ENCODE measurements at regions of chr7 and their contacts with region 1.

Region 1: DNA sequence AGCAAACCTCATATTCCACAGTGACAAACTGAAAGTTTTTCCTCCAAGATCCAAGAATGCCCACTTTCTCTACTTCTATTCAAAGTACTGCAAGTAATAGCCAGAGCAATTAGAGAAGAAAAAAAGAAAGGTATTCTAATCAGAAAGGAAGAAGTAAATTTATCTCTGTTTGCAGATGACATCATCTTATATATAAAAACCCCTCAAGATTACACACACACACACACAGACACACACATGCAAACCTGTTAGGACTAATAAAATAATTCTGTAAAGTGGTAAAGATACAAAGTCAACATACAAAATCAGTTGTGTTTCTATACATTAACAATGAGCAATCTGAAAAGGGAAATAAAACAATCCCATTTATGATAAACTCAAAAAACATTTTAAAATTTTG is 44.7 kb upstream of the AASS start:
- DNase-seq: no peak
- H3K4me3 ChIP-seq: no peak overlapping the region
- H3K27ac ChIP-seq: no peak overlapping the region
- H3K4me1 ChIP-seq: no peaks in the 10 kb centered on the region
- H3K27me3 ChIP-seq: no peaks in the 10 kb centered on the region
- CTCF ChIP-seq: no peak
- POLR2A ChIP-seq: no peak

Region 2: DNA sequence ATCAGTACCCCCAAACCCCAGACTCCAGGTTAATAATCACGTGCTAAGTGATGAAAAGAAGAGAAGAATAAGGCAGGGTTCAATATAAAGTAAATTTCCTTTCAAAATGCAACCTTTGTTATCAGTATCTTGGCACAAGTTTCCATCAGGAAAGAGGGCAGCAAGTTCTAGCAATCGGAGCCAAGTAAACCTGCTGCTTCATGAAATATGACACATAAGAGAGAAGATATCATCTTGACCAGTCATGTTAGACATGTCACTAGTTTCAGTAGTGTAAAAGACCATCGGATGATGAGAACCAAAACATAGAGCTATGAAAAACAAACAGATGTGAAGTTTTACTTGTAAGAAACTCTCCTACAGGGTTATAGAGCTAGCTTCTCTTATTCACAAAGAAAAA is 88.8 kb before region 1 on chr7:
- intact Hi-C with region 1: no loop called
- DNase-seq: no peak
- H3K4me3 ChIP-seq: no peak overlapping the region
- H3K27ac ChIP-seq: no peak overlapping the region
- H3K4me1 ChIP-seq: no peaks in the 10 kb centered on the region
- H3K27me3 ChIP-seq: no peaks in the 10 kb centered on the region
- CTCF ChIP-seq: no peak
- POLR2A ChIP-seq: no peak

Region 3: GRCh38 chr7:123397746-123398338 is 1209.1 kb after region 1 on chr7:
- intact Hi-C with region 1: loop called (anchors 5 kb)
- DNase-seq: no peak
- H3K4me3 ChIP-seq: no peak overlapping the region
- H3K27ac ChIP-seq: no peak overlapping the region
- H3K4me1 ChIP-seq: no peaks in the 10 kb centered on the region
- H3K27me3 ChIP-seq: no peaks in the 10 kb centered on the region
- CTCF ChIP-seq: no peak
- POLR2A ChIP-seq: no peak

Measured in vagina (tissue), 2 donors.